H1 (cell line): ENCODE measurements at regions of chr6 and their contacts with region 1.

Region 1: DNA sequence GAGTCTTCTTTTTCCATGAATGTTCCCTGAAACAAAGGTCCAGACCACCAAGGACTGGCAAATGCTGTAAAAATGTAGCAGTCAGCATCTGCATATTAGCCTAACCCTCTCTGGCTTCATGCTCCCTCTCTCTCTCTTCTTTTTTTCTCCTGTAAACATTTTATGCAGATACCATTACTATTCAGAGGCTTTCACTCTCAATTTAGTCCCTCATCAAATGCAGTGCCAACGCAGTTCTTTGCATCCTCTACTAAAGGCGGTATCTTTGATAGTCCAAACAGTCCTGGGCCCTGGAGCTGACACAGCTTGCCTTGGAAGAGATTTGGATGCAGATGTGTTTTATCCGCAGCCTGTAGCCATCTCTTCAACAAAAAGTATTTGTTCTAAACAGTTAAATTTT is 167.1 kb upstream of the MMS22L start:
- DNase-seq: no peak
- H3K4me3 ChIP-seq: no peak overlapping the region
- H3K27ac ChIP-seq: no peak overlapping the region
- H3K4me1 ChIP-seq: peaks cover 0 to 3% (median 0%) of the 10 kb centered on the region in 4 experiments; a peak in 1 of 7 replicates
- H3K27me3 ChIP-seq: peaks cover 0 to 1% (median 0%) of the 10 kb centered on the region in 4 experiments; a peak in 1 of 7 replicates
- CTCF ChIP-seq: no peak
- EP300 ChIP-seq: no peak
- POLR2A ChIP-seq: no peak
- RAD21 ChIP-seq: no peak

Region 2: GRCh38 chr6:97401533-97401932 is 48.6 kb before region 1 on chr6:
- CTCF ChIA-PET with region 1: no interaction called
- POLR2A ChIA-PET with region 1: no interaction called
- DNase-seq: no peak
- H3K4me3 ChIP-seq: no peak overlapping the region
- H3K27ac ChIP-seq: no peak overlapping the region
- H3K4me1 ChIP-seq: no peaks in the 10 kb centered on the region
- H3K27me3 ChIP-seq: no peaks in the 10 kb centered on the region
- CTCF ChIP-seq: no peak
- EP300 ChIP-seq: no peak
- POLR2A ChIP-seq: no peak
- RAD21 ChIP-seq: no peak

Region 3: GRCh38 chr6:97437087-97437486 is 13.0 kb before region 1 on chr6:
- CTCF ChIA-PET with region 1: interaction called, 13 read pairs
- POLR2A ChIA-PET with region 1: no interaction called
- DNase-seq: no peak
- H3K4me3 ChIP-seq: no peak overlapping the region
- H3K27ac ChIP-seq: no peak overlapping the region
- H3K4me1 ChIP-seq: no peaks in the 10 kb centered on the region; a peak in 2 of 7 replicates
- H3K27me3 ChIP-seq: no peaks in the 10 kb centered on the region
- CTCF ChIP-seq: peak in 2 of 3 experiments; percentile 59 to 68; a peak in 2 of 4 replicates
- EP300 ChIP-seq: no peak
- POLR2A ChIP-seq: no peak
- RAD21 ChIP-seq: peak; percentile 55 to 62